ENCODE measurements at regions of chr6 and their contacts with region 1.

Region 1: DNA sequence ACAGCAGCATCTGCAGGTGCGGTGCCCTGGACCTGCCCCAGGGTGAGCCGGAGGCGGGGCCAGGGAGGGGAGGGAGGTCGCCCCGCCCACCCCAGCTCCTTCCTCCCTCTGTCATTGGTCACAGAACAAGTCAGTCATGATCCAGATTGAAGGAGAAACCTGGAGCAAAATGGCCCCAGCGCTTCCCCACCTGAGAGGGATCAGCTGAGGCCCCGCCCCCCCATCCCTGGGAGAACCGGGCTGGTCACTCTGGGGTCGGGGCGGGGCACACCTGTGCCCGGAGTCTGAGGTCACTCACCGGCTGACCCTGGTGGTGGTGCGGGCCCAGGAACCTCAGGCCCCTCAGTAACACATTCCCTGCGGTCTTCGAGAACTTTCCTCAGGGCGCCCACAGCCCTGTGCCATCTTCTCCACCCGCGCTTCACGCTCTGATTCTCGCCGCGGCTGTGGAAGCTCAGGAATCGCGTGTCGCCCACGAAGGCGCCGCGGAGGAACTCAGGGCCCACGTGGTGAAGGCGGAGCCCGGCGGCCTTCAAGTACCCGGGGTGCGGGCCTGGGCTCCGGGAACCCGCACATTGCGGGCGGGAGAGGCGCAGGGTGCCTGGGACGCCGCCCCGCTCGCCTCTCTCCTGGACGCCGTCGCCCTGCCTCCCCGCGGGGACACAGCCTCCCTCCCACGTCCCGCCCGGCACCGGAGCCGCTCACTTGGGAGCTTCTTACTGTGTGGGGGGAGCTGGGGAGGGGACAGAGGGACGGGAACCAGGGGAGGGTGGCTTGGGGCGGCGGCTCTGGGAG is 36.4 kb upstream of the HLA-C start:
- DNase-seq: peak; percentile 69 to 83 (median 76)
- H3K4me3 ChIP-seq: peak overlapping the region; percentile 55 to 60
- H3K4me3 Mint-ChIP-seq: peak overlapping the region; percentile 84 to 94 (median 88)
- H3K27ac ChIP-seq: no peak overlapping the region
- H3K27ac Mint-ChIP-seq: peak overlapping the region in 4 of 7 donors; percentile 87 to 96 (median 89)
- H3K4me1 ChIP-seq: peaks cover 12% of the 10 kb centered on the region
- H3K4me1 Mint-ChIP-seq: peaks cover 1 to 14% (median 3%) of the 10 kb centered on the region in 4 donors
- H3K27me3 ChIP-seq: no peaks in the 10 kb centered on the region
- H3K27me3 Mint-ChIP-seq: peaks cover 8 to 9% of the 10 kb centered on the region in 2 donors

Region 2: DNA sequence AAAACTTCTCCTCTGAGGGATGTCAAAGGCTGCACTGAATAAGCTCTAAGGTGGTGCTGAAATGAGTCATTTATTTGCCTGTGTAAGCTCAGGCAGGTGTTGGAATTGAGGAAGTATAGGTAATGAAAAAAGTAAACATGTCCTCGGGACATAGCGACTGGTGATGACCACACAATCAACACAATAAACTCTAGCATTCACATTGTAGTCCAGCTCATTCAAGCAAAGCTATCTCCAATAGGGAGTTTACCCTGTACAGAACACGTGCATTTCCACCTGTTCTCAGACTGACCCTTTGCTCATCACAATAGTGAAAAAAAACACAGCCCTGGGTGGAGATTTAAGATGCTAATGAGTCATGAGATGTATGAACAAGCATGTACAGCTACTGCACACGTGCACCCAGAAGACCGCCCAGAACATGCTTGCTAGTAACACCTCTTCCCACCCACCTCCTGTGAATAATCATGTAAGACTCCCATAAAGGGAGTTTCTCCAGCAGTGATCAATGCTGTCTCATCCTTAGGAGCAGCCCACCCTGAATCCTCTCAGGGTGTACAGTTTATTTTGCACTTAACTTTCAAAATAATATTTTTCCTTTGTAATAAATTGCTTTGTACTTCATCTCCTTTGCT is 104.8 kb before region 1 on chr6:
- CTCF ChIA-PET with region 1: no interaction called
- POLR2A ChIA-PET with region 1: interaction called, 30 read pairs
- intact Hi-C with region 1: no loop called
- DNase-seq: peak in 3 of 5 donors; percentile 48 to 86 (median 62)
- H3K4me3 ChIP-seq: peak overlapping the region; percentile 60 to 66
- H3K4me3 Mint-ChIP-seq: peak overlapping the region; percentile 81 to 99 (median 92)
- H3K27ac ChIP-seq: peak overlapping the region; percentile 76
- H3K27ac Mint-ChIP-seq: peak overlapping the region; percentile 92 to 100 (median 97)
- H3K4me1 ChIP-seq: peaks cover 59% of the 10 kb centered on the region
- H3K4me1 Mint-ChIP-seq: peaks cover 46 to 72% (median 56%) of the 10 kb centered on the region in 4 donors
- H3K27me3 ChIP-seq: no peaks in the 10 kb centered on the region
- H3K27me3 Mint-ChIP-seq: no peaks in the 10 kb centered on the region

Region 3: DNA sequence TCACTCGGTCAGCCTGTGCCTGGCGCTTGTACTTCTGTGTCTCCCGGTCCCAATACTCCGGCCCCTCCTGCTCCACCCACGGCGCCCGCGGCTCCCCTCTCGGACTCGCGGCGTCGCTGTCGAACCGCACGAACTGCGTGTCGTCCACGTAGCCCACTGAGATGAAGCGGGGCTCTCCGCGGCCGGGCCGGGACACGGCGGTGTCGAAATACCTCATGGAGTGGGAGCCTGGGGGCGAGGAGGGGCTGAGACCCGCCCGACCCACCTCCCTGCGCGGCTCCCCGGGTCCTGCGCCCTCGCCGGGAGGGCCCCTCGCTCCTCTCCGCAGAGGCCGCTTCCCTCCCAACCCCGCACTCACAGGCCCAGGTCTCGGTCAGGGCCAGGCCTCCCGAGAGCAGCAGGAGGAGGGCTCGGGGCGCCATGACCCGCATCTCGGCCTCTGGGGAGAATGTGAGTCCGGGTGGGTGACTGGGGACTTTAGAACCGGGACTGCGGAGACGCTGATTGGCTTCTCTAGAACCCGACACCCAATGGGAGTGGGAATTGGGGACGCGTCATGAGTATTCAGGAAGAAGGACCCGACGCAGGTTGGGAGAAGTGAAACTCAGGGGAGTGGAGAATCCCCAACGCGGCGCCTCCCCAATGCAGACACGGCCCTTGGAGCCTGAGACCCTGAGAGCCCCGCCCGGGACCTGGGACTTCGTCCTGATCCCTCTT is 36.4 kb before region 1 on chr6 and contains the start of gene HLA-C:
- CTCF ChIA-PET with region 1: no interaction called
- POLR2A ChIA-PET with region 1: interaction called, 30 read pairs
- intact Hi-C with region 1: loop called (anchors 5 kb)
- DNase-seq: peak; percentile 92 to 98 (median 93)
- H3K4me3 ChIP-seq: peak within 1 kb of the TSS; percentile 88 to 94
- H3K4me3 Mint-ChIP-seq: peak within 1 kb of the TSS; percentile 95 to 100 (median 98)
- H3K27ac ChIP-seq: peak within 1 kb of the TSS; percentile 100
- H3K27ac Mint-ChIP-seq: peak within 1 kb of the TSS; percentile 99 to 100 (median 100)
- H3K4me1 ChIP-seq: peaks cover 51% of the 10 kb centered on the region
- H3K4me1 Mint-ChIP-seq: peaks cover 45 to 77% (median 54%) of the 10 kb centered on the region in 4 donors
- H3K27me3 ChIP-seq: no peaks in the 10 kb centered on the region
- H3K27me3 Mint-ChIP-seq: peaks cover 0 to 2% of the 10 kb centered on the region in 2 donors
- total RNA-seq, gene HLA-C: 1,481 to 1,487 TPM

Region 4: GRCh38 chr6:31351401-31352309 is 43.4 kb after region 1 on chr6:
- CTCF ChIA-PET with region 1: interaction called, 3 read pairs
- POLR2A ChIA-PET with region 1: interaction called, 29 read pairs
- intact Hi-C with region 1: no loop called
- DNase-seq: peak; percentile 48 to 71 (median 56)
- H3K4me3 ChIP-seq: no peak overlapping the region
- H3K4me3 Mint-ChIP-seq: peak overlapping the region; percentile 62 to 99 (median 98)
- H3K27ac ChIP-seq: peak overlapping the region; percentile 4
- H3K27ac Mint-ChIP-seq: peak overlapping the region; percentile 85 to 100 (median 88)
- H3K4me1 ChIP-seq: peaks cover 54% of the 10 kb centered on the region
- H3K4me1 Mint-ChIP-seq: peaks cover 51 to 74% (median 63%) of the 10 kb centered on the region in 4 donors
- H3K27me3 ChIP-seq: no peaks in the 10 kb centered on the region
- H3K27me3 Mint-ChIP-seq: no peaks in the 10 kb centered on the region